Activated T-helper 1 cell treated with anti-CD3 and anti-CD28 coated beads, Interleukin-12 subunit alpha, Interleukin-12 subunit beta, Interleukin-2, Interleukin-4 antibody, amounts not matched to agents 30 ng/mL and 10 ng/mL and 1 ng/mL, durations not matched to agents 14 hours and 24 hours and 36 hours (primary cell): ENCODE measurements at regions of chr2 and their contacts with region 1.

Region 1: GRCh38 chr2:105369747-105370690 is 28.8 kb downstream of the FHL2 start:
- DNase-seq: peak; percentile 78
- H3K4me3 Mint-ChIP-seq: no peak overlapping the region
- H3K27ac Mint-ChIP-seq: no peak overlapping the region
- H3K4me1 Mint-ChIP-seq: peaks cover 26% of the 10 kb centered on the region
- H3K27me3 Mint-ChIP-seq: peaks cover 2% of the 10 kb centered on the region

Region 2: DNA sequence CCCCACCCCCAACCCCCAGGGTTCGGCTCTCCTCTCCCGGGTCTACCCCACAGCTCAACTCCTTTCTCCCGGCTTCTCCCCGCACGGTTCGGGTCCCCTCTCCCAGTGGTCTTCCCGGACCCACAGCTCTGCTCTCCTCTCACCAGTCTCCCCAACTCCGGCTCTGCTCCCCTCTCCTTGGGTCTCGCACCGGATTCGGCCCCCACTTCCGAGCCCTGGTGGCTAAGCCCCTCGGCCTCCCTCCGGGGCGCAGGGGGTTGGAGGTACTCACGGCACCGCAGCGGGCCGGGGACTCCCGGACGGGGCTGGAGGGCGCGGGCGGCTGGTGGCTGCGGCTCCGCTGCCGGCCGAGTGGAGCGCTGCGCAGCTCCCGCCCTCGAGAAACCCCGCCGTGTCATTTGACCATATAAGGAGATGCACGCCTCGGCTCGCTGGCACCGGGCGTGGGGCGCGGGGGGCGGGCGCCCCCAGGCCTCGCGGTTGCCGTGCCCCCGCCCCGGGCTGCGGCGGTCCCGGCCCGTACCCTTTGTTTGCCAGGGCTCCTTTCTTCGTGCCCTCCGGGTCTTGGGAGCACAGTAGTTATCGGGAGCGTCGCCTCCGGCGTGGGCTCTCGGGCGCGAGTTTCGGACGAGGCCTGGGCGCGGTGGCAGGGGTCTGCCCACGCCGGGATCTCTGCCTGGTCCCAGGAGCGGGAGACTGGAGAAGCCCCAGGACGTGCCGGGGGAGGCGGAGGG is 28.8 kb after region 1 on chr2 and contains the start of gene FHL2:
- intact Hi-C with region 1: loop called (anchors 2 kb)
- DNase-seq: peak; percentile 65
- H3K4me3 Mint-ChIP-seq: peak within 1 kb of the TSS; percentile 82
- H3K27ac Mint-ChIP-seq: peak within 1 kb of the TSS; percentile 54
- H3K4me1 Mint-ChIP-seq: peaks cover 4% of the 10 kb centered on the region
- H3K27me3 Mint-ChIP-seq: peaks cover 39% of the 10 kb centered on the region
- total RNA-seq, gene FHL2: 2.3 and 2.6 TPM in 2 replicates

Region 3: GRCh38 chr2:105521205-105521604 is 151.2 kb after region 1 on chr2:
- intact Hi-C with region 1: loop called (anchors 1 kb)
- DNase-seq: no peak
- H3K4me3 Mint-ChIP-seq: no peak overlapping the region
- H3K27ac Mint-ChIP-seq: no peak overlapping the region
- H3K4me1 Mint-ChIP-seq: no peaks in the 10 kb centered on the region
- H3K27me3 Mint-ChIP-seq: peaks cover 2% of the 10 kb centered on the region

Region 4: DNA sequence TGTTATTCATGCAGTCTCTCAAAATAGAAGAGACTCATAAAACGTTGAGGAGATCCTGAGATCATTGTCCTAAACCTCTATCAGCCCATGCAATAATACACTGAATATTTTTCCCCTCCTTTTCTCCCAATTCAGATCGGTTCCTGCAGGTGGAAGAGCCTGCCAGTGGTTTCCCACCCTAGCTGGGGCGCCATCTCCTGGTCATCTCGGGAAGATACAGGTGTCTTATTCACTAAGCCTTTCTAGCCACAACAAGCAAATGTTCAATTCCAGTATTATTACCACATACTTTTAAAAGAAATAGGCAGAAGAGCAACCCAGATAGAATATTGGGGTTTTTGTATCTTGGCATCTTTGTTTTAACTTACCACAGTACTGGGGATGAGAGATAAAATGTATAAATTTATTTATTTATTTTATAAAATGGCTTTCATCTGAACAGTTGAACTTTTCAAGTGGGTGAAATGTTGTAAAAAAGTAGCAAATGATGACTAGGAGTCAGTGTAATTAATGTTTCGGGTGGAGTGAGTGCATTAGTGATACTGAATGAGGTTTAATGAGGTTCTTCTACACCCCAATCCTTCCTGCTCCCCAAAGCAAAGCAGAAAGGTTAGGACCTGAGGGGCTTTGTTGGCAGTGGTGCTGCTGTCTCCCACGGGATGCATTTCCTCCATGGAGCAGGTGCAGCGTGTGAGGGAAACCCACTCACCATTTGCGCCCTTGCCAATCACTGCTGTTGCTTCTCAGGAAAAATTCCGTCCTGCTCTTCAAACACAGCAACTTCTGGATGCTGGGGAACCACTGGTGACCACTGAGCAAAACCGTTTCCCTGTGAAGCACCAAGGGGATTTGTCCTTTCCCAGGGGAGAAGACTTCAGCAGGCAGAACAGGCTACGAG is 176.0 kb after region 1 on chr2:
- intact Hi-C with region 1: loop called (anchors 1 kb)
- DNase-seq: peak; percentile 31
- H3K4me3 Mint-ChIP-seq: no peak overlapping the region
- H3K27ac Mint-ChIP-seq: no peak overlapping the region
- H3K4me1 Mint-ChIP-seq: peaks cover 5% of the 10 kb centered on the region
- H3K27me3 Mint-ChIP-seq: peaks cover 7% of the 10 kb centered on the region

Region 5: DNA sequence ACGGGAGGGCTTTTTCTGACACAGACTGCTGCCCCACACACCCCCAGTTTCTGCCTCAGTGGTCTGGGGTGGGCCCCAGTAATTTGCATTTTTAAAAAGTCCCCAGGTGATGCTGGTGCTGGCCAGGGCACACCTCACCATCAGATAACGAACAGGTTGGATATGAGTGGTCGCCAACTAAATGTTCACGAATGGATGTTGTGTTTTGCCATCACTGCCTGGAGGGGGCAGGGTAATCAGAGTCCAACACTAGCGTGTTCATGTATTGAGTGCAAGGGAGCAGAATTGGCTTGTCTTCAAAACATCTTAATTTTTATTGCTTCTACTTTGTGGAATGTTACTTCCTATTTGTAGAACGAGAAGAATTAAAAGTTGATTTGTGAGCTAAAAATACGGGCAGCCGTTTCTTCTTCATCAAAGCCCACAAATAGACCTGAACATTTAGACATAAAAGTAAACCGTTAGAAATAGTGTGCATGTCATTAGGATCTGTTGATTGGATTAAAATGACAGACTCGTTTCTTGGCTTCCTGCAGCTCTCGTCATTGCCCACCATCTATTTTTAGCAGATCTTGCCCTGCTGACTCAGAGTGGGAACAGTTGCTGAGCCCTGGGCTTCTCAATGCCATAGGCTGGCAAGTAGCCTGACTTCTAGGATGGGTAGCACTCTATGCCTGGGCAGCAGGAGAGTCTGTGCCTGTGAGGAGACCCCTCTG is 419.9 kb after region 1 on chr2:
- intact Hi-C with region 1: loop called (anchors 10 kb)
- DNase-seq: peak; percentile 66
- H3K4me3 Mint-ChIP-seq: peak overlapping the region; percentile 66
- H3K27ac Mint-ChIP-seq: peak overlapping the region; percentile 92
- H3K4me1 Mint-ChIP-seq: peaks cover 85% of the 10 kb centered on the region
- H3K27me3 Mint-ChIP-seq: no peaks in the 10 kb centered on the region

Region 6: DNA sequence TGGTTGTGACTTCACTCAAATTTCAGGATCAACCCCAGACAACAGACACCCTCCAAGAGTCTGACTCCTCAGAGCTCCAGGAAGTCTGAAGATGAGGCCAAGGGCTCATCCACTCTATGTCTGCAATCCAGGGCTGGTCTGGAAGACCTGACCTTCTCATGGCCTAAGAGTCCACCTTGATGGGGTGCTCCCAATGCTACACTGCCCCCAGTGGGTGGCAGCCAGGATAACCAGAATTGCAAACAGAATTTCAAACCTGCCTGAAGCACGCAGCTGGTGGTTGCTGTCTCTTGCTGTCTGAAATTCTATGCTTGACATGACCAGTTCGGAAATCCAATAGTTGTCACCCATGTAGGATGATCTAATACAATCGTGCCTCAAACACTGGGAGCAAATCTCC is 728.1 kb after region 1 on chr2:
- intact Hi-C with region 1: loop called (anchors 10 kb)
- DNase-seq: no peak
- H3K4me3 Mint-ChIP-seq: no peak overlapping the region
- H3K27ac Mint-ChIP-seq: no peak overlapping the region
- H3K4me1 Mint-ChIP-seq: peaks cover 31% of the 10 kb centered on the region
- H3K27me3 Mint-ChIP-seq: no peaks in the 10 kb centered on the region